ENCODE measurements at regions of chr2 and their contacts with region 1.

Region 1: DNA sequence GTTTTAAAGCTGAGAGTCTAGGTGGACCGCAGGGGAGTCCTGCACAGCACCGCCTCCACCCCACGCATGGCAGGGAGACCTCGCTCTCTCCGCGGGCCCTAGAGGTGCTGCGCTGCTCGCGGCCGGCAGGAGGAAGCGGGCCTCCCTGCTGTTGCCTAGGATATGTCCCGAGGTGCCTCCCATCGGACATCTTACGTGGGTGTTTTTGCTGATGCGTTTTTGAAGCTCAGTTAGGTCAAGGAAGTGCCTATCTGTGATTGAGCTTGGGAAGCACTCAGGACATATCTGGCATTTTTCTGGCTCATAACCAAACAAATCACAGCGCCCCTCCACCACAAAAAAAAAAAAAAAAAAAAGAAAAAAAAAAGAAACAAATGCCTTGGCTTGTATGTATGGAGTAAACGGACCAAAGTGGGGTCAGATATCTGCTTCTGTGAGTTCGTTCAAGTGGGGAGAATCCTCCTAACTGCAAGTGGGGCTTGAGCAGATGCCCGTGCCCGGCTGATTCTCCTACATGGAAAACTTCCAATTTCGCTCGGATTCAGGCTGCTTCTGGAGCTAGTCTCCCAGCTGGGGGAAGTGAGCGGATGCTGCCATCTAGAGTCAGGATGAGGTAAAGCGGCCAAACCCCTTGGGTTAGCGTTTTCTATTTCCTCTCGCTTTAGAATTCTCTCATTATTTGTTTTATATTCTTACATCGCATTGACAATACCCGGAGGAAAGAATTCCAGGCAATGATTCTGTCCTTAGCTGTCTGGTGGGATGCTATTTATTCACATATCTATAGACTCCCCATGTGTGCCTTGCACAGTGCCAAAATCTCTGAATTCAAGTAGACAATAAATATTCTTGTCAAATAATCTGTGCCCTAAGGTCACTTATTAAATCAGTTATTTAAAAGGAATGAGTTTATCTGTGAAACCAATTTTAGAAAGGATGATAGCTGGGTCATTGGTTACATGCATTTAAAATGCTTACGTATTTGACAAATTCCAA is 95.3 kb downstream of the CD8B2 start:
- DNase-seq: no peak

Region 2: GRCh38 chr2:105571445-105571987 is 1010.9 kb before region 1 on chr2:
- intact Hi-C with region 1: no loop called
- DNase-seq: no peak

Region 3: GRCh38 chr2:106104332-106105062 is 477.9 kb before region 1 on chr2:
- intact Hi-C with region 1: loop called (anchors 5 kb)
- DNase-seq: no peak

Region 4: GRCh38 chr2:106542811-106543259 is 39.6 kb before region 1 on chr2:
- intact Hi-C with region 1: loop called (anchors 5 kb)
- DNase-seq: no peak

Region 5: GRCh38 chr2:106565599-106565998 is 16.8 kb before region 1 on chr2:
- intact Hi-C with region 1: loop called (anchors 2 kb)
- DNase-seq: no peak

Region 6: GRCh38 chr2:106825161-106825560 is 242.7 kb after region 1 on chr2:
- intact Hi-C with region 1: no loop called
- DNase-seq: no peak